ENCODE measurements at regions of chr4 and their contacts with region 1.

Region 1: DNA sequence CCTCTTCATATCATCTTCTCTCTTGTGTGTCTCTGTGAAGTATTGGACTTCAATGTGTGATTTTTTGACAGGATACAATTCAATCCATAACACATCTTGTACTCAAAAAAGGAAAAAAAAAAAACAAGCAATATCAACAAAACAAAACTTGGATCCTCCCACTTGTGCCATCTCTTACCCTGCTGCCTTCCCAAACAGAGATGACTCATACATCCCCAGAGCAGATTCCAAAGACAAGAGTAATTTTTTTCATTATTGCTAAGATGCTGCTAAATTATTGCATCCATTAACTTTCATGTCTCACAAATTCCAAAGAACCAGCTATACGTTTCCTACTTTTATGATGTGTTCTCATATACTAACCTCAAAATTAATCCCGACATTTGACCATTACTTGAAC is 479.2 kb downstream of the GBA3 start:
- DNase-seq: no peak
- H3K4me3 ChIP-seq: no peak overlapping the region
- H3K27ac ChIP-seq: no peak overlapping the region
- H3K4me1 ChIP-seq: no peaks in the 10 kb centered on the region
- H3K27me3 ChIP-seq: no peaks in the 10 kb centered on the region
- CTCF ChIP-seq: no peak

Region 2: GRCh38 chr4:23245203-23245832 is 73.3 kb after region 1 on chr4:
- intact Hi-C with region 1: loop called (anchors 5 kb)
- DNase-seq: no peak
- H3K4me3 ChIP-seq: no peak overlapping the region
- H3K27ac ChIP-seq: no peak overlapping the region
- H3K4me1 ChIP-seq: no peaks in the 10 kb centered on the region
- H3K27me3 ChIP-seq: no peaks in the 10 kb centered on the region
- CTCF ChIP-seq: no peak

Measured in tibial artery (tissue), 4 donors.